Activated CD4-positive, alpha-beta memory T cell treated with anti-CD3 and anti-CD28 coated beads for 36 hours (primary cell): ENCODE measurements at regions of chrX and their contacts with region 1.

Region 1: GRCh38 chrX:79366873-79367749 is at the start of gene ITM2A:
- DNase-seq: peak; percentile 75
- H3K4me3 Mint-ChIP-seq: peak within 1 kb of the TSS; percentile 95
- H3K27ac Mint-ChIP-seq: peak within 1 kb of the TSS; percentile 95
- H3K4me1 Mint-ChIP-seq: peaks cover 24% of the 10 kb centered on the region
- H3K27me3 Mint-ChIP-seq: no peaks in the 10 kb centered on the region
- total RNA-seq, gene ITM2A: 87.7 to 98.1 TPM

Region 2: GRCh38 chrX:79081895-79082512 is 285.1 kb before region 1 on chrX:
- CTCF ChIA-PET with region 1: no interaction called
- POLR2A ChIA-PET with region 1: no interaction called
- intact Hi-C with region 1: loop called (anchors 5 kb)
- DNase-seq: peak; percentile 30
- H3K4me3 Mint-ChIP-seq: peak overlapping the region; percentile 69
- H3K27ac Mint-ChIP-seq: peak overlapping the region; percentile 79
- H3K4me1 Mint-ChIP-seq: peaks cover 41% of the 10 kb centered on the region
- H3K27me3 Mint-ChIP-seq: no peaks in the 10 kb centered on the region

Region 3: GRCh38 chrX:79161655-79162054 is 205.5 kb before region 1 on chrX:
- CTCF ChIA-PET with region 1: no interaction called
- POLR2A ChIA-PET with region 1: interaction called, 4 read pairs
- intact Hi-C with region 1: loop called (anchors 5 kb)
- DNase-seq: peak; percentile 50
- H3K4me3 Mint-ChIP-seq: peak overlapping the region; percentile 81
- H3K27ac Mint-ChIP-seq: peak overlapping the region; percentile 98
- H3K4me1 Mint-ChIP-seq: peaks cover 55% of the 10 kb centered on the region
- H3K27me3 Mint-ChIP-seq: no peaks in the 10 kb centered on the region

Region 4: GRCh38 chrX:79325263-79325958 is 41.7 kb before region 1 on chrX:
- CTCF ChIA-PET with region 1: no interaction called
- POLR2A ChIA-PET with region 1: no interaction called
- intact Hi-C with region 1: loop called (anchors 5 kb)
- DNase-seq: peak; percentile 49
- H3K4me3 Mint-ChIP-seq: peak overlapping the region; percentile 77
- H3K27ac Mint-ChIP-seq: peak overlapping the region; percentile 79
- H3K4me1 Mint-ChIP-seq: peaks cover 15% of the 10 kb centered on the region
- H3K27me3 Mint-ChIP-seq: no peaks in the 10 kb centered on the region

Region 5: DNA sequence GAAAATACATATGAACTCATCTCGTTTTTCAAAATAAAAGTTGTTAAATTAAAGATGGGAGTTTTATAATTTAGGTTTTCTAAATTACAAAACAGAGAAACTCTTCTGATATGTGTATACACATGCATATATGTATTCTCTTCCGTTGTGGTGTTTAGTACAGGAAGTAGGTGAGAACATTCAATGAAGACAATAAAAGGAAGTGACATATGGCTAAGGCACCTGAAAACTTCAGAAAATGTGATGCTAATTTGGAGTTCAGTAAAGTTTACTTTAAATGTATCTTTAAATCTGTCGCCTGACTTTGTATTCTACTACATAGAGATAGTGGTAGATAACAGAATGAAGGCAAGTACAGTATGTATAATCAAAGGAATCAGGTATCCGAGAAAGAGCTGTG is 33.5 kb after region 1 on chrX:
- CTCF ChIA-PET with region 1: no interaction called
- POLR2A ChIA-PET with region 1: no interaction called
- intact Hi-C with region 1: no loop called
- DNase-seq: no peak
- H3K4me3 Mint-ChIP-seq: no peak overlapping the region
- H3K27ac Mint-ChIP-seq: no peak overlapping the region
- H3K4me1 Mint-ChIP-seq: peaks cover 3% of the 10 kb centered on the region
- H3K27me3 Mint-ChIP-seq: no peaks in the 10 kb centered on the region